Aorta (tissue), 5 donors: ENCODE measurements at regions of chr3 and their contacts with region 1.

Region 1: DNA sequence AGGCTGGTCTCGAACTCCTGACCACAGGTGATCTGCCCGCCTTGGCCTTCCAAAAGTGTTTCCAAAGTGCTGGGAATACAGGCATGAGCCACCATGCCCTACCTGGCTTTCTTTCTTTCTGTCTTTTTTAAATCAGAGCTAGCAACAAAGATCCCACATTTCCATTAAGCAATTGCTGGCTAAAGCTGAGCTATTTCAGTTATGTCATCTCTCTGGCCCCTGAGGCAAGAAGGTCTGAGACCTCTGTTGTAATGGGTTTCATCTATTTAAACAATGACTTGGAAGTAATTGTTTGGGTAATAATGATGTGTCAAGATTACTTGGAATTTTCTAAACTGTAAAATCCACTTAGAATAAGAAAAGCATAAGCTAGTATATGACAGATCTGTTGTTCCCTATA is 30.2 kb upstream of the CRBN start:
- DNase-seq: no peak
- ATAC-seq: no peak
- H3K4me3 ChIP-seq: no peak overlapping the region
- H3K27ac ChIP-seq: no peak overlapping the region
- H3K4me1 ChIP-seq: peaks cover 0 to 3% of the 10 kb centered on the region in 2 donors
- H3K27me3 ChIP-seq: no peaks in the 10 kb centered on the region

Region 2: DNA sequence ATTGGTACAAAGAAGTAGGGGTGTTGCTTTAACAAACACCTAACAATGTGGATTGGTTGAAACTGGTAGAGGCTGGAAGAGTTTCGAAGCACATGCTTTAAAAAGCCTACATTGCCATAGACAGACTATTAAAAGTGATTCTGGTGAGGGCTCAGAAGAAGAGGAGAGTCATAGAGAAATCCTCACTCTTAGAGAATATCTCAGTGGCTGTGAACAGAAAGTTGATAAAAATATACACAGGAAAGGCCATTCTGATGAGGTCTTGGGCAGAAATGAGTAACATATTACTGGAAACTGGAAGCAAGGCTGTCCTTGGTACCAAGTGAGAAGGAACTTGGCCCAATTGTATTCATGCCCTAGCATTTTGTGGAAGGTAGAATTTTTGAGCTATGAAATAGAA is 143.4 kb after region 1 on chr3:
- intact Hi-C with region 1: loop called in 1 of 2 experiments (anchors 2 kb)
- DNase-seq: no peak
- ATAC-seq: no peak
- H3K4me3 ChIP-seq: no peak overlapping the region
- H3K27ac ChIP-seq: peak overlapping the region in 1 of 2 donors; percentile 96
- H3K4me1 ChIP-seq: peaks cover 4 to 8% of the 10 kb centered on the region in 2 donors
- H3K27me3 ChIP-seq: no peaks in the 10 kb centered on the region

Region 3: GRCh38 chr3:3560591-3561311 is 351.0 kb after region 1 on chr3:
- intact Hi-C with region 1: loop called in 1 of 2 experiments (anchors 10 kb)
- DNase-seq: no peak
- ATAC-seq: peak; percentile 55
- H3K4me3 ChIP-seq: no peak overlapping the region
- H3K27ac ChIP-seq: peak overlapping the region; percentile 96 to 99
- H3K4me1 ChIP-seq: peaks cover 2 to 4% of the 10 kb centered on the region in 2 donors
- H3K27me3 ChIP-seq: no peaks in the 10 kb centered on the region